CD4-positive, alpha-beta T cell (primary cell): ENCODE measurements at regions of chr3 and their contacts with region 1.

Region 1: DNA sequence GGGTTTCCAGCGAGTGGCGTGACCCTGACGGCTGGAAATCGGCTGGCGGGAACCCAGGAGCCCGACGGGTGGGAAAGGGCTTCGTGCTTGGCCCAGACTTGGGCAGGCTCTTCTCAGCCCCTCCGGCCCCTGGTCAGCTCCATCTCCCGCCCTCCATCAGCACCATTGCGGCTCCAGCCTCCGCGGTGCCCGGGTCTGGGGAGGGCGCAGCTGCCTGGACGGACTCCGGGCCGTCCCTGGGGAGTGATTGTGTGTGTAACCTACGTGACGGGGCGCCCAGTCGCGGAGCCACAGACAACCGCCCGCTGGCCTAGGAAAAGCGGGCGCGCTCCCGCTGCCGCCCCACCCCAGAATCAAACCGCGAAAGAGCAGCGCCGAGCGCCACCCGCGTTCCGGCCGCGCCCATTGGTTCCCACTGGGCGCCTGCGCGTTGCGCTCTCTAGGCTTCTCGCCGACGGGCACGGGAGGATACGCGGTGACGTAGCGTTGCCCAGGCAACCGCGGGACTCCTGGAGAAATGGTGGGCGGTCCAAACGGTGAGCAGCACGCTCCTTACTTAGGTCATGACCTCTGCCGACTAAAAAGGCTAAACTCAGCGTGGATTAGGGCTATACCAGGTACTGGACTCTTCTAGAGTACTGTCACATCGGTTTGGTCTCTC is at the start of gene CFAP20DC:
- DNase-seq: peak; percentile 66 to 95 (median 84)
- ATAC-seq: peak; percentile 95
- H3K4me3 ChIP-seq: peak within 1 kb of the TSS; percentile 72
- H3K4me3 Mint-ChIP-seq: peak within 1 kb of the TSS; percentile 85
- H3K27ac ChIP-seq: peak within 1 kb of the TSS in 1 of 2 donors; percentile 35
- H3K27ac Mint-ChIP-seq: peak within 1 kb of the TSS; percentile 74
- H3K4me1 ChIP-seq: peaks cover 12% of the 10 kb centered on the region
- H3K4me1 Mint-ChIP-seq: peaks cover 6% of the 10 kb centered on the region
- H3K27me3 ChIP-seq: no peaks in the 10 kb centered on the region
- H3K27me3 Mint-ChIP-seq: no peaks in the 10 kb centered on the region
- CTCF ChIP-seq: no peak
- total RNA-seq, gene CFAP20DC: 0.11 to 0.20 TPM

Region 2: DNA sequence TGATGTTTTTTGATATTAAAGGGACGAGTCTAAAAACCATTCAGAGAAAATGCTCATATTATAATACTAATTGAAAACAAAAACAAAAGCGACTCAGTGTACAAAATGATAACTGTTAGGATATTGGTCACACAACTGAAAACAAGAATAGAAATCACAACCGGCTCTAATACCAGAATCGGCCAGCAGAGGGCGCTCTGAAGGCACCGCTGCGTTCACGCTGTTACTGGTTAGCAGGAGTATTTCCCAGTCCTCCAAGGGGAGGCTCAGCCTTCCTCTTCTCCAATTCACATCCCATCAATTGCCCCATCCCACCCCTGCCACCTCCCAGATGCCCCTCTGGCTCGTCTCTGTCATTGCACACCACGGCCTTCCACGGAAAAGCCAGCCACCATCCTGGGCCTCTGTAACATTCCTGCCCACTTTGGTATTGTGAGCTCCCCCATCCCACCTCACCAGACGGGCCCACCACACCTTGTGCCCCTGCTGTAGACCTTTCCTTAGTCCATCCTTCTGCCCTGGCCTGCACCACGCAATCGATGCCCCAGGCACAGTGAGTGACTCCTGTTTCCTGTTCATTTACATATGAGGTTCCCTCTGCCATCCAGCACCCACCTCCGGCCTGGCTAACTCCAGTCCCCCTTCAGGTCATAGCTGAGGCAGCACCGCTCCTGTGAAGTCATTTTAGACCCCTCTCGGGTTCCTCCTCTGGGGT is 481.1 kb before region 1 on chr3:
- CTCF ChIA-PET with region 1: no interaction called
- POLR2A ChIA-PET with region 1: no interaction called
- intact Hi-C with region 1: loop called in 1 of 2 experiments (anchors 5 kb)
- DNase-seq: peak; percentile 39 to 78 (median 64)
- ATAC-seq: peak; percentile 54
- H3K4me3 ChIP-seq: no peak overlapping the region
- H3K4me3 Mint-ChIP-seq: no peak overlapping the region
- H3K27ac ChIP-seq: no peak overlapping the region
- H3K27ac Mint-ChIP-seq: no peak overlapping the region
- H3K4me1 ChIP-seq: peaks cover 6% of the 10 kb centered on the region
- H3K4me1 Mint-ChIP-seq: peaks cover 6% of the 10 kb centered on the region
- H3K27me3 ChIP-seq: no peaks in the 10 kb centered on the region
- H3K27me3 Mint-ChIP-seq: no peaks in the 10 kb centered on the region
- CTCF ChIP-seq: peak; percentile 97

Region 3: DNA sequence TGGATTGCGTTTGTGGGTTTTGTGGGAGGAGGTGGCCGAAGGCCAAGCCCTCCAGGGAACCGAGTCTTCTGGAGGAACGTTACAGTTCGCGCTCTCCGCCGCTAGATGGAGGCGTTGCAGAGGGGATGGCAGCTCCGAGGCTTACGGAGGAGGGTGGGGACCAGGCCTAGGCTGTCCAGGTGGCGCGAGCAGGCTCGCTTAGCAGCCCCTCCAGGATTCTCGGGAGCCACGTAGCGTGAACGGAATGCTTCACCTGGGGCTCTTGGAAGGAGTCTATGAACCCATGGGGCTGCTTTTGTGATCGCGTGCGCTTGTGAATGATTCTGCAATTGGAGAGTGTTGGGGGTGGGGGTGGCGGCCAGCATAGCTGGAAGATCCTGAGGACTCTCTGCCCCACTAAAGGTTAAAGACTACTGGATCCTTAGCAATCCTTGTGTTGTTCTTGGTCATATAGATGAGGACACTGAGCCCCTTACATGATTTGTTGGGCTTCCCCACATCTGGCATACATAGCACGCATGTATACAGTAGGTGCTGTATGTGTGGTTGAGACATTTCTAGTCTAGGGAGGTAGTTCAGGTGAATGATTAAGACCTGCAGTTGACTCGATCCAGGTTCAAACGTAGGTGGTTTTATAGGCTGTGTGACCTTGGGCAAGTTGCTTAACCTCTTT is 409.0 kb before region 1 on chr3:
- CTCF ChIA-PET with region 1: no interaction called
- POLR2A ChIA-PET with region 1: no interaction called
- intact Hi-C with region 1: loop called (anchors 5 kb)
- DNase-seq: peak; percentile 10 to 60 (median 32)
- ATAC-seq: peak; percentile 57
- H3K4me3 ChIP-seq: no peak overlapping the region
- H3K4me3 Mint-ChIP-seq: no peak overlapping the region
- H3K27ac ChIP-seq: no peak overlapping the region
- H3K27ac Mint-ChIP-seq: no peak overlapping the region
- H3K4me1 ChIP-seq: peaks cover 4% of the 10 kb centered on the region
- H3K4me1 Mint-ChIP-seq: no peaks in the 10 kb centered on the region
- H3K27me3 ChIP-seq: peaks cover 0 to 2% of the 10 kb centered on the region in 2 experiments
- H3K27me3 Mint-ChIP-seq: peaks cover 10% of the 10 kb centered on the region
- CTCF ChIP-seq: peak; percentile 60

Region 4: GRCh38 chr3:58994746-58995330 is 55.0 kb before region 1 on chr3:
- CTCF ChIA-PET with region 1: no interaction called
- POLR2A ChIA-PET with region 1: no interaction called
- intact Hi-C with region 1: loop called (anchors 2 kb)
- DNase-seq: peak in 5 of 14 experiments; percentile 9 to 62 (median 52)
- ATAC-seq: no peak
- H3K4me3 ChIP-seq: no peak overlapping the region
- H3K4me3 Mint-ChIP-seq: no peak overlapping the region
- H3K27ac ChIP-seq: no peak overlapping the region
- H3K27ac Mint-ChIP-seq: no peak overlapping the region
- H3K4me1 ChIP-seq: no peaks in the 10 kb centered on the region
- H3K4me1 Mint-ChIP-seq: no peaks in the 10 kb centered on the region
- H3K27me3 ChIP-seq: no peaks in the 10 kb centered on the region
- H3K27me3 Mint-ChIP-seq: no peaks in the 10 kb centered on the region
- CTCF ChIP-seq: peak; percentile 58

Region 5: DNA sequence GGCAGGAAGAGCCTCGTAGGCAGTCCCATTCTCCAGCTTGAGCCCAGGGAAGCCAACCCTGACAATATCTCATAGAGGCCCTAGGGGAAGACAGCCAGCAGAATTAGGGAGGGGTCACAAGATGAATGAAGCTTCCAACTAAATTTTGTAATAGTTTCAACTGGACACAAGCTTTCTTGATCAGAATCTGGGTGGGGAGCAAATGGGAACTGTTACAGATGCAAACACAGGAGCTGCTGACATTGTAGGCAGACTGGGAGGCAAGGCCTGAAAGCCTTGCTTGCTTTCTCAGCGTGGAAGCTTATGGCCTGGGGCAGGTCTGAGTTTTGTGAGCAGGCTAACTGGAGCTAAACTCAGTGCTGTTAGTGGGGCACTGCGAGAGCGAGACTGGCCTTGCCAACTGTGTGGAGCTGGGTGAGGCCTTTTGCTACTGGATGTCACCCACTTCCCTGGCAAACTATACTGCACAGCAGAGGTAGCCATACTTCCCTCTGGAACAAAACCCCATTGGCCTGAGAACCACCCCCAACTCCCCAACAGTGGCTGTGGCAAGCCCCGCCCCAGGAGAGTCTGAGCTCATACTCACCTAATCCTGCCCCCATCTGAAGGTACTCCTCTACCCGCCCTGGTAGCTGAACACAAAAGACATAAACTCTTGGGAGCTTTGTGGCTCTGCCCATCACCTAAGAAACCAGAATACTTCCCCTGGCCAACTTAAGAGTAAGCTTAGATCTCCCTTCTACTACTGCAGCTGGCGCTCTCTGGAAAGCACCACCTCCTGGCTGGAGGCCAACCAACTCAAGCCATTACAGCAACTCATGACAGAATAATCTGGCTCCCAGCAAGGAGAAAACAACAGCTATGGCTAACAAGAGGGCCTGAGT is 42.9 kb before region 1 on chr3:
- CTCF ChIA-PET with region 1: no interaction called
- POLR2A ChIA-PET with region 1: no interaction called
- intact Hi-C with region 1: no loop called
- DNase-seq: no peak
- ATAC-seq: no peak
- H3K4me3 ChIP-seq: no peak overlapping the region
- H3K4me3 Mint-ChIP-seq: no peak overlapping the region
- H3K27ac ChIP-seq: no peak overlapping the region
- H3K27ac Mint-ChIP-seq: no peak overlapping the region
- H3K4me1 ChIP-seq: no peaks in the 10 kb centered on the region
- H3K4me1 Mint-ChIP-seq: no peaks in the 10 kb centered on the region
- H3K27me3 ChIP-seq: no peaks in the 10 kb centered on the region
- H3K27me3 Mint-ChIP-seq: no peaks in the 10 kb centered on the region
- CTCF ChIP-seq: no peak

Region 6: GRCh38 chr3:59273976-59274375 is 224.2 kb after region 1 on chr3:
- CTCF ChIA-PET with region 1: no interaction called
- POLR2A ChIA-PET with region 1: no interaction called
- intact Hi-C with region 1: no loop called
- DNase-seq: no peak
- ATAC-seq: no peak
- H3K4me3 ChIP-seq: no peak overlapping the region
- H3K4me3 Mint-ChIP-seq: no peak overlapping the region
- H3K27ac ChIP-seq: no peak overlapping the region
- H3K27ac Mint-ChIP-seq: no peak overlapping the region
- H3K4me1 ChIP-seq: no peaks in the 10 kb centered on the region
- H3K4me1 Mint-ChIP-seq: no peaks in the 10 kb centered on the region
- H3K27me3 ChIP-seq: no peaks in the 10 kb centered on the region
- H3K27me3 Mint-ChIP-seq: no peaks in the 10 kb centered on the region
- CTCF ChIP-seq: no peak